Cardiac septum (tissue), 1 donor: ENCODE measurements at regions of chr5 and their contacts with region 1.

Region 1: GRCh38 chr5:28766565-28767158 is 1728.3 kb upstream of the CDH9 start:
- DNase-seq: no peak

Region 2: GRCh38 chr5:28344803-28345433 is 421.7 kb before region 1 on chr5:
- intact Hi-C with region 1: loop called (anchors 5 kb)
- DNase-seq: no peak

Region 3: DNA sequence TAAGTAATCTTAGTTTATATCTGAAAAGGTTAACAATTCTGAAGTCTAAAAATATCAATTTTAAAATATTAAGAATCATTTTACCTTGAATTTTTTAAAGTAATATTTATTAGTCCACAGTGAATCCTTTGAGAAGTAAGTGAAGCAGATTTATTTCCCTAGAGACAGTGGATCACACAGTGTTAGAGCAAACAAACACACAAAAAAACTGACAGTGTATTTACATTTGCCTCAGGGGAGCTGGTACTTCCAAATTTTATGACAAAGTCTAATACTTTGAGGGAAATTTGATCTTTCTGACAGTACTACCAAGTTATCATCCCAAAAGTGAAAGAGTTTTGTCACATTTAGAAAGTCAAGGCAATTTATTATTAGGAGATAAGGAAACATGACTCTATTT is 22.3 kb after region 1 on chr5:
- intact Hi-C with region 1: no loop called
- DNase-seq: no peak